ENCODE measurements at regions of chr21 and their contacts with region 1.

Region 1: GRCh38 chr21:31580866-31581276 is 78.6 kb upstream of the SOD1 start:
- DNase-seq: peak in 4 of 5 donors; percentile 37 to 66 (median 52)
- H3K4me3 ChIP-seq: no peak overlapping the region
- H3K27ac ChIP-seq: no peak overlapping the region
- H3K4me1 ChIP-seq: no peaks in the 10 kb centered on the region
- H3K27me3 ChIP-seq: no peaks in the 10 kb centered on the region
- CTCF ChIP-seq: peak in 1 of 3 donors; percentile 35
- EP300 ChIP-seq: no peak
- POLR2A ChIP-seq: no peak

Region 2: DNA sequence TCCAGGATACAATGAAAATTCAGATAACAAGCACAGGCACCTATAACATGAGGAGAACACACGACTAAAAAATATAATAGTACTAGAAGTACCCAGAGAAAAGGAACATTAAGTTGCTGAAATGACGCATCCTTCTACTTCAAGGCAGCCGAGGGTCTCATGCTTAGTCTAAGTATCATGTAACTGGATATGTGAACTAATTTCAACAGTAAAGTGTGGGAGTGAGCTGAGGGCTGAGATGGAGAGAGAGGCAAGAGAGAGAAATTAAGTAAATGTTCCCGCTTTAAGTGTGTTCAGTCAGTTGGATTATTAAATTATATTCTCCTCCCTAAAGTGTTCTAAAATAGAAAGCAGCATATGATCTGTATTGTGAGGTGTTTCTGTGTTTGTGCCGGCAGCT is 390.4 kb before region 1 on chr21:
- intact Hi-C with region 1: loop called in 2 of 4 experiments (anchors 5 to 10 kb)
- DNase-seq: no peak
- H3K4me3 ChIP-seq: no peak overlapping the region
- H3K27ac ChIP-seq: no peak overlapping the region
- H3K4me1 ChIP-seq: no peaks in the 10 kb centered on the region
- H3K27me3 ChIP-seq: no peaks in the 10 kb centered on the region
- CTCF ChIP-seq: no peak
- EP300 ChIP-seq: no peak
- POLR2A ChIP-seq: no peak

Region 3: GRCh38 chr21:31198575-31198974 is 382.3 kb before region 1 on chr21:
- intact Hi-C with region 1: loop called in 3 of 4 experiments (anchors 5 to 10 kb)
- DNase-seq: no peak
- H3K4me3 ChIP-seq: no peak overlapping the region
- H3K27ac ChIP-seq: no peak overlapping the region
- H3K4me1 ChIP-seq: no peaks in the 10 kb centered on the region
- H3K27me3 ChIP-seq: no peaks in the 10 kb centered on the region
- CTCF ChIP-seq: peak in 1 of 3 donors; percentile 15
- EP300 ChIP-seq: no peak
- POLR2A ChIP-seq: no peak

Region 4: DNA sequence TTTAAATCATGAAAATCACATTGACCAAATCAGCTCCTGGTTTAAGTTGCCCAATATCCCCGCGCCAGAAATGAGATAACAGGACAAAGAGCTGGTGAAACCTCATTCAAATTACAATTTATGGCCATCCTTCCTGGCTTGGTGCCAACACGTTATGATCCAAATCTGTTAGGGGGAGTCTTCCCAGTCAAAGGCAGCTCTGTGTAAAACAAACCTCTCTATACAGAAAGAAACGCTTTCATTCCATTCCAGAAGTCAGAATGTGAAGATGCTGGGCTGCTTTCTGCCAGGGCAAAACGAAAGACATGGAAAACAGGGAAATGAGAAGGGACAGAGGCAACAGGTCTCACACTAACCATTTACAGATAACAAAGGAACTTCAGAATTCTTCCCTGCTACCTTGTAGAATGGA is 183.3 kb before region 1 on chr21:
- intact Hi-C with region 1: no loop called
- DNase-seq: no peak
- H3K4me3 ChIP-seq: no peak overlapping the region
- H3K27ac ChIP-seq: no peak overlapping the region
- H3K4me1 ChIP-seq: no peaks in the 10 kb centered on the region
- H3K27me3 ChIP-seq: no peaks in the 10 kb centered on the region
- CTCF ChIP-seq: no peak
- EP300 ChIP-seq: no peak
- POLR2A ChIP-seq: no peak